Mammary epithelial cell (primary cell): ENCODE measurements at regions of chr2 and their contacts with region 1.

Region 1: DNA sequence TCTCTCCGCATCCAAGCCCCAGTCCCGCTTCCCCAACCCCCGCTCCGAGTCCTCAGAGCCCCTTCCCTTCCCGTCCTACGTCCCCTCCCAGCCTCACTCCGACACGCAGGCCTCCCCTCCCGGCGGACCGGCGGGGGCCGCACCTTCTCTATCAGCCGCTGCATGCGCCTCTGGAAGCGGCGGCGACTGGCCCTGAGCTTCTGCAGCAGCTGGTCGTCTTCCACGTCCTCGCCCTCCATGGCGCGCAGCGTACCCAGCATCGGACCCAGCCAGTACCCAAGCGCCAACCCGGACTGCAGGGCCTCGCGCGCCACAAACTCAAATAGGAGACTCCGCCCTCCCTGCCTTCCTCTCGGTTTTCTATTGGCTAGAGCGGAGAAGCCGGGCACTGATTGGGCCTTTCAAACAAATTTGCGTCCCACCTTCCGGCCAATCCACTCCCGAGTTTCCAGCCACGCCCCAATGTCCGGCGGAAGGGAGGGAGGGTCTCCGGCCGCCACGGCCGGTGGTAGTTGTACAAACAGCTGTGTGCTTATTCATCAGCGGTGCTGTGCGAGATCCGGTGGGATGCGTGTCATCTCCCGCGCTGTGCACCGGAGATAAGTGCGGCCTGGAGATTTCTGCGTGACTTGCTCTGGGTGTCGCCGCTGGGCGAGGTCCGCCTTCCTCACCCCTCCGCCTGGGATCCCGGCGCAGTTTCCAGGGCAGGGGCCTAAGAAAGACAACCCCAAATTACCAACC is at the start of gene HJURP:
- DNase-seq: peak; percentile 93
- H3K4me3 ChIP-seq: peak within 1 kb of the TSS; percentile 94 to 95 (median 95)
- H3K27ac ChIP-seq: peak within 1 kb of the TSS; percentile 53
- H3K4me1 ChIP-seq: peaks cover 26% of the 10 kb centered on the region
- H3K27me3 ChIP-seq: no peaks in the 10 kb centered on the region
- CTCF ChIP-seq: no peak
- total RNA-seq, gene HJURP: 0.67 to 43.5 TPM

Region 2: DNA sequence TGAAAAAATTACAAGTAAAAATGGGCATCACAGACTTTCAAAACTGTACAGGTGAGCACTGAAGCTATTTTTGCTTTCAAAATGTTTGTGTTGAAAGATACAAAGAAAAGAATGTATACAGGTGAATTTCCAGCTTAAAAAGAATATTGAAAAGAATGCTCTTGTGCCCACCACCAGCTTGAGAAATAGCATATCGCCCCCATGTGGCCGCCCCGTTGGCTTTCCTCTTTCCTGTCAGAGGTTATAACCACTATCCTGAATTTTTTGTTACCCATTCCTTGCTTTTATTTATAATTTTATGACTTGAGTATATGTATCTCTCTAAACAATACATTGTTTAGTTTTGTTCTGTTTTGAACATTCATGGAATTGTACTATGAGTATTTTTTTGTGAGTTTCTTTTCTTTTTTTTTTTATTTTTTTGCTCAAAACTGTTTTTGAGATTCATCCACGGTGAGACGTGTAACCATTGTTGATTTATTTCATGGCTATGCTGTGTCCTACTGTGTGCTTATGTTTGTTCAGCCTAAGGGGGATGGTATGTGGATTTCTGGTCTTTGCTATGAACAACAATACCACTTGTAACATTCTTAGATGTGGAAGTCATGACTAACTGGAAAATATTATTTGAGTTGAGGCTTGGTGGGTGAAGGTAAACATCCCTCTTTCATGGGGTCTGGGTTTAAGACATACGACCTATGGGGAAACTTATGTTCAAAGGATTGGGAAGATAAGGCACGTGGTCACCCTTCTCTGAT is 74.4 kb after region 1 on chr2:
- CTCF ChIA-PET with region 1: interaction called, 3 read pairs
- dilution Hi-C with region 1: no loop called
- in situ Hi-C with region 1: no loop called
- intact Hi-C with region 1: loop called (anchors 2 kb)
- DNase-seq: no peak
- H3K4me3 ChIP-seq: no peak overlapping the region
- H3K27ac ChIP-seq: no peak overlapping the region
- H3K4me1 ChIP-seq: peaks cover 12% of the 10 kb centered on the region
- H3K27me3 ChIP-seq: no peaks in the 10 kb centered on the region
- CTCF ChIP-seq: peak; percentile 66 to 72

Region 3: GRCh38 chr2:234102112-234102511 is 247.7 kb after region 1 on chr2:
- CTCF ChIA-PET with region 1: no interaction called
- dilution Hi-C with region 1: no loop called
- in situ Hi-C with region 1: no loop called
- intact Hi-C with region 1: loop called (anchors 5 kb)
- DNase-seq: peak; percentile 70
- H3K4me3 ChIP-seq: no peak overlapping the region
- H3K27ac ChIP-seq: no peak overlapping the region
- H3K4me1 ChIP-seq: peaks cover 9% of the 10 kb centered on the region
- H3K27me3 ChIP-seq: no peaks in the 10 kb centered on the region
- CTCF ChIP-seq: peak; percentile 29 to 41